HEK293 (cell line): ENCODE measurements at regions of chr2 and their contacts with region 1.

Region 1: DNA sequence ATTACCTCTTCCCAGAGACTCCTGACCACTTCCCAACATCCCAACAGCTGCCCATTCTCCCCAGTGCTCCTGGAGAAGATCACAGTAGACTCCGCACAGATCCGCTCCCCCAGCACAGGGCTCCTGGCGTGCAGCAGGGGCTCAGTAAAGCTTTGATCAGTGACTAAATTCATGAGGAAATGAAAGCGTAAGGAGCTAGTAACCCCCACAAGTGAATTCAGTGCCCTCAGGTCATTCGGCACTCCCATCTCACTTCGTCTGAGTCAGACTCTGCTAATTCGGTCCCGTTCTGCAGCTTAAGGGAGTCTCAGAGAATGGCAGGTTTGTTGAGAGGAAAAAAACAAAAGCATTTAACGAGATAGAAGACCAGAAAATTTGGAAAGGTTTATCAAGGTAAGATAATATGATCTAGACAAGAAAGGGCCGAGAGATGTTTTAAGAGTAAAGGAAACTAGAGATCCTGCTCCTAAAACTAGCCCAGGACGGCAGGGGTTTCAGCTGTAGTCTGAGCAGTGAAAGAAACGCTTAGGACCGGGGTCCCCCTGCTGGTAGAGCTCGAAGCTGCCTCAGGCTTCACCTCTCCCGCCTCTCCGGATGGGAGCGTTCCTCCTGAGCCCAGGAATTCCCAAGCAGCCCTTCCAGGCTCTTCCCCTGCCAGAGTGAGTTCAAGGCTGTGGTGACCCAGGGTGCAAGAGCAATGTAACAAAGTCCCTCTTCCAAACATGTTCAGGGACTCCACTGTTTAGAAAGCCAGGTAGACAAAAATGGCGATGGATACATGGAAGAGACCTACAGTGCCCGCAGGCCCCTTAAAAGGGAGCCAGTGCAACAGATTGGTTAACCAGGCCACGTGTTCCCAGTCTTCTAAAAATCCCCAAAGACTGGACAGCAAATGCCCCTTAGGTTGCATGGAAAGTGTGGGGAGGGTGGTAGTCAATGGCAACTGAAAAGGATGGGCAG is 127.3 kb downstream of the DNER start:
- H3K4me3 ChIP-seq: no peak overlapping the region
- H3K27ac ChIP-seq: no peak overlapping the region
- H3K4me1 ChIP-seq: no peaks in the 10 kb centered on the region
- CTCF ChIP-seq: no peak; the same call in 1 of the 2 replicates

Region 2: DNA sequence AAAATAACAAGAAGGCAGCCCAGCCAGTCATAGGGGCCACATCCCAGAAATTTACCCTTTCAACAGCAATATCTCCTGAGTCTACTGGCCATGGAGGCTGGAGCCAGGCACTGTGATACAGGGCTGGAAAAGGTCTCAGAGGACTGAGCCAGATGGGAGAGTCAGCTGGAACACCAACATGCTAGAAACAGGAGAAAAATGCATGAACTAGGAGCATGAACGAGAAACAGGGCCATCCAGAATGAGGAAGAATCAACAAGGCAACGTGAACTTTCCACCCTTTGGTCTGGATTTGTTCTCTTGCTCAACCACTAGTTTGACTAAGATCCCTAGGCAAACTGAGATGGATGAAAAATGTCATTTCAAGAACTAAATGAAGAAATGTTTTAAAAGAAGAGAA is 329.0 kb before region 1 on chr2:
- CTCF ChIA-PET with region 1: no interaction called
- POLR2A ChIA-PET with region 1: no interaction called
- H3K4me3 ChIP-seq: no peak overlapping the region
- H3K27ac ChIP-seq: no peak overlapping the region
- H3K4me1 ChIP-seq: no peaks in the 10 kb centered on the region
- CTCF ChIP-seq: no peak

Region 3: GRCh38 chr2:229376866-229377265 is 210.2 kb before region 1 on chr2:
- CTCF ChIA-PET with region 1: no interaction called
- POLR2A ChIA-PET with region 1: no interaction called
- H3K4me3 ChIP-seq: no peak overlapping the region
- H3K27ac ChIP-seq: no peak overlapping the region
- H3K4me1 ChIP-seq: no peaks in the 10 kb centered on the region
- CTCF ChIP-seq: no peak

Region 4: DNA sequence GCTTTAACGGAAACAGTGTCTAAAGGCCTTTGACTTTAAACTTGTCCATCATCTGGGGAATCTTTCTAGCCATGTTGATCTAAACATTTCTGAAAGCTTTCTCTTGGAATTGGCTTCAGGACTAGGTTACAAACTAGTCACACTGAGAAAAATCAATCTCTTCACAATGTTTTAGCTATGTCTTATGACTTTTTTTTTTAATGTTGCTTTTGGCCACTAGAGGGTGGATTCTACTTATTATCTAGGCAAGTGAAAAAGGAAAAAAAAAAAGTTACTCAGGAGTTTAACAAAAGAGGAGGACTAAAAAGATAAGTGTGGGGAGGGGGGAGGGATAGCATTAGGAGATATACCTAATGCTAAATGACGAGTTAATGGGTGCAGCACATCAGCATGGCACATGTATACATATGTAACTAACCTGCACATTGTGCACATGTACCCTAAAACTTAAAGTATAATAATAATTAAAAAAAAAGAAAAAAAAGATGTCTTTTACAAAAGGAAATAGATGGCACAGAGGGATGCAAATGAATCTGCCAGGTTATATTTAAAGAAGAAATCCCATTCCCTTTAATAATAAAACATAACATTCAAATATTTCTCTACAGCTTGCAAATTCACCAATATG is 155.6 kb before region 1 on chr2:
- CTCF ChIA-PET with region 1: interaction called, 28 read pairs
- POLR2A ChIA-PET with region 1: no interaction called
- H3K4me3 ChIP-seq: no peak overlapping the region
- H3K27ac ChIP-seq: no peak overlapping the region
- H3K4me1 ChIP-seq: no peaks in the 10 kb centered on the region
- CTCF ChIP-seq: no peak